HepG2 (cell line): ENCODE measurements at regions of chr21 and their contacts with region 1.

Region 1: GRCh38 chr21:32412162-32413014 is at the start of gene EVA1C:
- DNase-seq: no peak
- ATAC-seq: peak; percentile 89
- H3K4me3 ChIP-seq: peak within 1 kb of the TSS; percentile 21 to 69 (median 53)
- H3K27ac ChIP-seq: no peak within 1 kb of the TSS
- H3K4me1 ChIP-seq: peaks cover 19% of the 10 kb centered on the region
- H3K27me3 ChIP-seq: peaks cover 5 to 31% of the 10 kb centered on the region in 2 experiments
- CTCF ChIP-seq: no peak
- EP300 ChIP-seq: no peak
- POLR2A ChIP-seq: no peak
- RAD21 ChIP-seq: no peak
- total RNA-seq, gene EVA1C: 0.29 TPM in 1 of 2 replicates, not detected in the other

Region 2: DNA sequence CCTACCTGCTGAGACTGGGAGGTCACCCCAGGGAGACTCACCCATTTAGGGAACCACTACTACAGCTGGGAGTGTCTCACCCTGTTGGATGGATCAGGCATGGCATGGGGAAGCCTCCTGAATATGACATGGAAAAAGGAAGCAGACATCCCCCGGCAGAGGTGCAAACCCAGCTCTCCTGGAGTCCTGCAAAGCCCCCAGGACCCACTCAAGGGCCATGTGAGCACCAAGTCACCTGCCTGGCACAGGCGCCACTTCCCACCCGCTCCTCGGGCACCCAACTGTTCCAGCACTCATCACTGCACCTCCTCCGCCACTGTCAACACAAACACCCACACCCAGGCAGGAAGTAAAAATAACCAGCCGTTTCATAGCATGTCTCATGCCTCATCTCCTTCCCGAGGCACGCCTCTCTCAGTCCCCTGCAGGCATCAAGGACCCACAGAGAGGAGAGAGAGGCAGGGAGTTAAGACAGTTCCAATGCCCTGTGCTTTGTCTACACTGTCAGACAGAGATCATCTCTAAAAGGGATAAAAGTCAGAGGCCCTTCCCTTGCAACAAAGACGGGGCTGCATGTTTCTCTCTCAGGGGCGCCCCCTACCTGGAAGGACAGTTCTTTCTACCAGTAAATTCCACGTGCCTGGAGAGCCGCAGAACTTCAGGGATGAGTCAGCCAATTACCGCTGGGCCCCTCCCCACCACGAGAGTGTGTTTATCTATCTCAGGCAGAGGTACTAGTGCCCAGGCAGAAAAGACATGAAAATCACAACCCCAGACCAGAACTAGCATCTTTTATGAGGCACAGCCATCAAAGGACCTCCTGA is 903.0 kb before region 1 on chr21:
- CTCF ChIA-PET with region 1: no interaction called
- POLR2A ChIA-PET with region 1: no interaction called
- in situ Hi-C with region 1: no loop called
- intact Hi-C with region 1: loop called (anchors 10 kb)
- DNase-seq: peak; percentile 18
- ATAC-seq: peak; percentile 64
- H3K4me3 ChIP-seq: no peak overlapping the region
- H3K27ac ChIP-seq: no peak overlapping the region
- H3K4me1 ChIP-seq: no peaks in the 10 kb centered on the region
- H3K27me3 ChIP-seq: no peaks in the 10 kb centered on the region
- CTCF ChIP-seq: peak; percentile 38; the same call in 1 of the 2 replicates
- EP300 ChIP-seq: no peak
- POLR2A ChIP-seq: no peak
- RAD21 ChIP-seq: no peak

Region 3: DNA sequence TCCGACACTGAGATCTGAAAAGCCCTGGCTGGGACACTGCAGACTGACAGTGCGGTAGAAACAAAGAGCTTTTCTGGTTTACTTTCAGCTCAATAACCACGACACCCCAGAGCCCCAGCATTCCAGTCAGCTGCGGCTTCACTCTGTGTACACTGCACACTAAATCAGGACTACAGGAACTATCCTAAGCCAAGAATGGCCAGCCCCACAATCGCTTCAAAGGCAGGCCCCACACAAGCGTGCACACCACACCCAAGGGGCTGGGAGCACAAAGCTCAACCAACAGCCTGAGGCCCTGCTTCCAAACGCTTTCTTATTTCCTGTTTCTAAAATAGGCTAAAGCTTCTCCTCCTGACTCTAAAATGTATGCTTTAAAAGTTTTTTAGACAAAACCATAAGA is 48.0 kb before region 1 on chr21:
- CTCF ChIA-PET with region 1: no interaction called
- POLR2A ChIA-PET with region 1: no interaction called
- in situ Hi-C with region 1: no loop called
- intact Hi-C with region 1: no loop called
- DNase-seq: peak; percentile 81
- ATAC-seq: peak; percentile 92
- H3K4me3 ChIP-seq: peak overlapping the region in 1 of 3 experiments; percentile 42; a peak in 1 of 6 replicates
- H3K27ac ChIP-seq: peak overlapping the region; percentile 66
- H3K4me1 ChIP-seq: peaks cover 37% of the 10 kb centered on the region
- H3K27me3 ChIP-seq: no peaks in the 10 kb centered on the region
- CTCF ChIP-seq: no peak
- EP300 ChIP-seq: peak in 1 of 2 experiments; percentile 45; a peak in 1 of 4 replicates
- POLR2A ChIP-seq: no peak
- RAD21 ChIP-seq: no peak

Region 4: GRCh38 chr21:32569261-32570230 is 157.2 kb after region 1 on chr21:
- CTCF ChIA-PET with region 1: no interaction called
- POLR2A ChIA-PET with region 1: no interaction called
- in situ Hi-C with region 1: no loop called
- intact Hi-C with region 1: loop called (anchors 2 kb)
- DNase-seq: peak; percentile 77
- ATAC-seq: peak; percentile 93
- H3K4me3 ChIP-seq: peak overlapping the region; percentile 70 to 79 (median 77)
- H3K27ac ChIP-seq: peak overlapping the region; percentile 71
- H3K4me1 ChIP-seq: peaks cover 36% of the 10 kb centered on the region
- H3K27me3 ChIP-seq: no peaks in the 10 kb centered on the region
- CTCF ChIP-seq: peak; percentile 86
- EP300 ChIP-seq: peak in 1 of 2 experiments; percentile 5; a peak in 1 of 4 replicates
- POLR2A ChIP-seq: peak; percentile 19 to 28; a peak in 1 of 4 replicates
- RAD21 ChIP-seq: peak; percentile 44